CD4-positive, alpha-beta T cell (primary cell): ENCODE measurements at regions of chr19 and their contacts with region 1.

Region 1: GRCh38 chr19:12564016-12564664 is 12.9 kb upstream of the ZNF564 start:
- DNase-seq: peak; percentile 76 to 97 (median 92)
- ATAC-seq: peak; percentile 100
- H3K4me3 ChIP-seq: no peak overlapping the region
- H3K4me3 Mint-ChIP-seq: no peak overlapping the region
- H3K27ac ChIP-seq: no peak overlapping the region
- H3K27ac Mint-ChIP-seq: no peak overlapping the region
- H3K4me1 ChIP-seq: peaks cover 8% of the 10 kb centered on the region
- H3K4me1 Mint-ChIP-seq: peaks cover 5% of the 10 kb centered on the region
- H3K27me3 ChIP-seq: no peaks in the 10 kb centered on the region
- H3K27me3 Mint-ChIP-seq: no peaks in the 10 kb centered on the region
- CTCF ChIP-seq: peak; percentile 98

Region 2: DNA sequence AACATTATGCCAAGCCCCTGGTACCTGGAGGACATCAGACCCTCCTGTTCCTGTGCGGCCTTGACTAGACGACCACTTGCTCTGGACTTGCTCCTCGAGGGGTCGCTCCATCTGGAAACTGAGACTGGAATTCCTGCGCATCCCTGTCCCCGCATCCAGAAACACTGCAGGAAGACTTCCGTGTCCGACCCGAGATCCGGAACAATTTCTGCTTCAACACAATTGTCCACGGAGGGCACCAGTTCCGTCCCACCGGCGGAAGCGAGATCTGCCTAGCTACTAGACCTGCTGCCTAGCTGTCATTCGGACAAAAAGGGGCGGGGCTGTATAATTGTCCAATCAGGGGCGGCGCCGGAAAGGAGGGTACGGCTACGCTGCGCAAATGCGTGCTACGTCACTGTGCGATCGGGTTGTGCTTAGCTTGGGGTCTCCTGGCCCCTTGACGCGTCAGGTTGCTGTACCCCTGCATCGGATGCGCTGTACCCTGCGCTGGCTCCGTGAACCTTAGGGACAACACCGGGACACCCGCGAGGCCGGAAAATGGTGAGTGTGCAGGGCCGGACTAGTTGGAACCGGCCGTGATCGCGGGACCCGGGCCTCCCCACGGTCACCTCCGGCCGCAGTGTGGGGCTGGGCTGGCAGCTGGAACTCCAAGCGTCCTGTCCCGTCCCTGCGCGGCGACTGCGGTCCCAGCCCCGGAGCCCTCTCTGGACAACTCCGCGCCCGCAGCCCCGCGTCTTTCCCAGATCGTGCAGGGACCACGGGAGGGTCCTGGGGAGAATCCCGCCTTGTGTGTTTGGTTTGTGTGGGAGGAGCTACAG is 46.6 kb after region 1 on chr19 and contains the starts of genes ZNF490 and ZNF791:
- CTCF ChIA-PET with region 1: no interaction called
- POLR2A ChIA-PET with region 1: interaction called, 6 read pairs
- intact Hi-C with region 1: loop called (anchors 1 to 5 kb)
- DNase-seq: peak; percentile 92 to 99 (median 96)
- ATAC-seq: peak; percentile 76
- H3K4me3 ChIP-seq: peak within 1 kb of the TSS; percentile 99
- H3K4me3 Mint-ChIP-seq: peak within 1 kb of the TSS; percentile 100
- H3K27ac ChIP-seq: peak within 1 kb of the TSS; percentile 85 to 88
- H3K27ac Mint-ChIP-seq: peak within 1 kb of the TSS; percentile 100
- H3K4me1 ChIP-seq: peaks cover 45% of the 10 kb centered on the region
- H3K4me1 Mint-ChIP-seq: peaks cover 40% of the 10 kb centered on the region
- H3K27me3 ChIP-seq: no peaks in the 10 kb centered on the region
- H3K27me3 Mint-ChIP-seq: no peaks in the 10 kb centered on the region
- CTCF ChIP-seq: no peak
- total RNA-seq, gene ZNF490: 6.2 to 7.1 TPM
- total RNA-seq, gene ZNF791: 102 to 103 TPM

Region 3: DNA sequence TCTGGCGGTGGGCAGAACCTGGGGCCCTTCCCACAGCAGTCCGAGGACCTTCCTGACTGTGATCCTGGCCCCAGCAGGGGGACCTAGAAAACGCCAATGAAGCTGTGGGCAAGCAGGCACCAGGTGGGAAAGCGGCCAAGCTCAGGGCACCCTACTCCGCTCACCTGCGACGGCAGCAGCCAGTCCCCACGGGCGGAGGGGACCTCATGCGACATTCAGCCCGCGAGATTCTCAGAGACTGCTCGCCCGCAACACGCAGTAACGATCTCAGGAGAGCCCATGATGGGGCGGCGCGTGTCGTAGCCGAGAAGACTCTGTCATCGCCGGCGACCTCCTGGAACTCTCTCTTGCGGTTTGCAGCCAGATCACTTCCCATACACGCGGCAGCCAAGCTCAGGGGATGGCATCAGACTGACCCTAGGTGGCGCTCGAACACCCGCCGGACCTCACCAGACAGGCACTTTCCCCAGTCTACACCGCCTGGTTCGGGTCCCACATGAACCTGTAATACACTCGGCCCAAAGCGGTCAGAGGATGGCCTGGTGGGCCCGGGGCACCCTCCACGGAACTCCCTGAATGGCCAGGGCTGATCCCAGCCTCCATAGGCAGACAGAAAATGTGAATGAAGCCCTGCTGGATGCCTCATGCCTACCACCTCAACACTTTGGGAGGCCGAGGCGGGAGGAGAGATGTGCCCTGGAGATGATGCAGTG is 75.9 kb after region 1 on chr19:
- CTCF ChIA-PET with region 1: interaction called, 5 read pairs
- POLR2A ChIA-PET with region 1: no interaction called
- intact Hi-C with region 1: loop called in 1 of 2 experiments (anchors 1 kb)
- DNase-seq: peak; percentile 72 to 92 (median 80)
- ATAC-seq: peak; percentile 72
- H3K4me3 ChIP-seq: peak overlapping the region; percentile 22
- H3K4me3 Mint-ChIP-seq: peak overlapping the region; percentile 55
- H3K27ac ChIP-seq: no peak overlapping the region
- H3K27ac Mint-ChIP-seq: peak overlapping the region; percentile 71
- H3K4me1 ChIP-seq: peaks cover 16% of the 10 kb centered on the region
- H3K4me1 Mint-ChIP-seq: peaks cover 22% of the 10 kb centered on the region
- H3K27me3 ChIP-seq: no peaks in the 10 kb centered on the region
- H3K27me3 Mint-ChIP-seq: no peaks in the 10 kb centered on the region
- CTCF ChIP-seq: peak; percentile 97

Region 4: GRCh38 chr19:12672744-12673143 is 108.6 kb after region 1 on chr19:
- CTCF ChIA-PET with region 1: interaction called, 6 read pairs
- POLR2A ChIA-PET with region 1: interaction called, 4 read pairs
- intact Hi-C with region 1: loop called (anchors 1 kb)
- DNase-seq: peak in 1 of 14 experiments; percentile 35
- ATAC-seq: no peak
- H3K4me3 ChIP-seq: no peak overlapping the region
- H3K4me3 Mint-ChIP-seq: peak overlapping the region; percentile 47
- H3K27ac ChIP-seq: no peak overlapping the region
- H3K27ac Mint-ChIP-seq: no peak overlapping the region
- H3K4me1 ChIP-seq: peaks cover 44% of the 10 kb centered on the region
- H3K4me1 Mint-ChIP-seq: peaks cover 31% of the 10 kb centered on the region
- H3K27me3 ChIP-seq: no peaks in the 10 kb centered on the region
- H3K27me3 Mint-ChIP-seq: no peaks in the 10 kb centered on the region
- CTCF ChIP-seq: no peak